Transverse colon (tissue), 4 donors: ENCODE measurements at regions of chr5 and their contacts with region 1.

Region 1: DNA sequence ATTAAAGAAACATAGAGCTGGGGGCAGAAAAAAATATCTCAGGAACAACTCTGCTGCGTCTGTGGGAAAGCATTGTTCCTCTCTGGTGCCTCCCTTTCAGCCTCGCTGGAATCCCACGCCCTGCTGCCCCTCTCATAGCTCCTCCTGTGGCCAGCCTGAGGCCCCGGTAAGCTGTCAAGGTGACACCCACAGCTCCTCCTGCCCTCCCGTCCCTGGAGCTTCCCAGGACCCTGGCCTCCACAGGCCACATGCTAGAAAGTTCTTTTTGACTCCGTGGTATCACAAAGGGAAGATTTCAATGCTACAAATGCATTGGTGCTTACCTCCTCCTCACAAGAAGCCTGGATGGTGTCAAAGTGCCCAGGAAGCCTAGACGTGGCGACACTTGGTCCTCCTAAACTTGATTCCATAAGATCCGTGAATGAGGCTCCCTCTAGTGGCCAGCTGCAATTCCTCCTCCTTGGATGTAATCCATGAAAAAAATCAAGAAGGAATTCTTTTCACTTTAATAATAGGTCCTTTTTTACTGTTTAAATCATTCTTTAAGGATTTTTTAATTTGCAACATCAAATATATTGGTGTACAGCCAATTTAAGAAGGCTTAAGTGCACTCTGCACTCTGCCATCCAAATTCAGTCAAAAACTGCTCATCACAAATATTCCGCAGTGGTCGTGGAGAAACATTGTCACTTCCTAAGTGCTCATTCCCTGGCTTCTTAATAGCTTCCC is 104.9 kb downstream of the CFAP90 start:
- DNase-seq: peak; percentile 65
- H3K4me3 ChIP-seq: no peak overlapping the region
- H3K27ac ChIP-seq: no peak overlapping the region
- H3K4me1 ChIP-seq: no peaks in the 10 kb centered on the region
- H3K27me3 ChIP-seq: no peaks in the 10 kb centered on the region
- CTCF ChIP-seq: peak; percentile 72 to 92 (median 84)
- EP300 ChIP-seq: no peak
- POLR2A ChIP-seq: no peak

Region 2: DNA sequence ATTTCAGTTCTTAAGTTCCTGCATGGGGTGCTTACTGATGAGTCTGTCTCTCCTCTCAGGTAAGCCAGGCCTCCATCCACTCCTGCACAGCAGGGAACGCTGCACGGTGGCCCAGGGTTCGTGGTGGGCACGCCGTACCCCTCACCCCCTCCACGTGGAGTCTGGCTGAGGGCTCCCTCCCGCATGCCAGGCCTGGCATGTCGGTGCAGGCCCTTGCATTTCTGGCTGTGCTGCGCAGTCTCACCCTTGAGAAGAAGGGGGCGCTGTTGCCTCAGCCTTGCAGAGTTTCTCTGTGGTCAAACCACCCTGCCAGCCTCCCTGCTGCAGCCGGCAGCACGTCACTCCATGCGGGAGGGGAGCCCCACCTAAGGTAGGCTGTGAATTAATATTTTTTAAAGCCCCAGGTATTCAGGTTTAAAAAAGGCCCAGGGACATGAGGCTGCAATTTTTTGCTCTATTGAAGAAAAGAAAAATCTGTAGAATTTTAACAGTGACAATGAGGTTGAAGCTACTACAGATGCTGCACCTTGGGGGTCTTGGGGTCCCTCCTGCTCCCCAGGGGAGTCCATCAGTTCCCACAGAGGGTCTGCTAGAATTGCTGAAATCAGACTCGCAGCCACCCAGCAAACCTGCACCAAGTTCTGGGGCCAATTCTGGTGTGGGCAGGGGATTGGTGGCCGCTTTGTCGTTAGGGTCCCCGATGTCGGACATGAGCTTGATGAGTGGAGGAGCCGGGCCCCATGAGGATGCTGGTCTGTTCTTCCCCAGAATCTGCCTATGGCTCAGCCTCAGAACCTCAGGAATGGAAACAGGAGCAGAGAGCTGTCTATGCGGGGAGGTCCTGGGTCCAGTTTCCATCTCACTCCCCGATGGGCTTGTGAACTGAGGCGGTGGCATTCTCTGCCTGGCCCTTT is 980.2 kb before region 1 on chr5:
- in situ Hi-C with region 1: loop called in 2 of 4 experiments (anchors 10 kb)
- intact Hi-C with region 1: no loop called
- DNase-seq: peak; percentile 84
- H3K4me3 ChIP-seq: peak overlapping the region in 1 of 4 donors; percentile 33
- H3K27ac ChIP-seq: peak overlapping the region; percentile 63 to 72 (median 68)
- H3K4me1 ChIP-seq: peaks cover 0 to 19% (median 12%) of the 10 kb centered on the region in 4 donors
- H3K27me3 ChIP-seq: no peaks in the 10 kb centered on the region
- CTCF ChIP-seq: peak; percentile 77 to 86 (median 83)
- EP300 ChIP-seq: no peak
- POLR2A ChIP-seq: no peak